Activated T-helper 1 cell treated with anti-CD3 and anti-CD28 coated beads, Interleukin-12 subunit alpha, Interleukin-12 subunit beta, Interleukin-2, Interleukin-4 antibody, amounts not matched to agents 30 ng/mL and 10 ng/mL and 1 ng/mL, durations not matched to agents 14 hours and 24 hours and 36 hours (primary cell): ENCODE measurements at regions of chr1 and their contacts with region 1.

Region 1: DNA sequence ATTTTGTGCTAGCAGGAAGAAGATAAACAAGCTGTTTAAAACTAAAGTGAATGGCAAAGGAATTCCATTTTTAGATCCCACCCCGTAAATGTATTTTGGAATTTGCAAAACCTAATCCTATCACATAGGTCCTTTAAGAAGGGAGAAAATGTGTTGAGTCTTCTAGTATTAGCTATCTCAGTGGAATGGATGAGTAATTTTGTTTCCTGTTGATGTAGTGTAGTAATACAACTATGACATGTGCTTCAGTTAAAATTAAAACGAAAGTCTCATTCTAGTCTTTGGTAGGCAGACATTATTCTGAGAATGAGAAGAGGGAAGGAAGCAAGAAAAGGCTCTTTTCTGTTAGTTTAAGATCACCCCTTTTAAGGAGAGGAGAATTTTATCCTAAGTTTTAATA is 265.9 kb upstream of the C1orf105 start:
- DNase-seq: no peak
- H3K4me3 Mint-ChIP-seq: peak overlapping the region; percentile 23
- H3K27ac Mint-ChIP-seq: peak overlapping the region; percentile 87
- H3K4me1 Mint-ChIP-seq: peaks cover 7% of the 10 kb centered on the region
- H3K27me3 Mint-ChIP-seq: peaks cover 3% of the 10 kb centered on the region

Region 2: GRCh38 chr1:172117800-172118199 is 36.8 kb before region 1 on chr1:
- intact Hi-C with region 1: loop called (anchors 5 kb)
- DNase-seq: peak; percentile 47
- H3K4me3 Mint-ChIP-seq: peak overlapping the region; percentile 13
- H3K27ac Mint-ChIP-seq: peak overlapping the region; percentile 2
- H3K4me1 Mint-ChIP-seq: peaks cover 25% of the 10 kb centered on the region
- H3K27me3 Mint-ChIP-seq: no peaks in the 10 kb centered on the region

Region 3: GRCh38 chr1:172211221-172211620 is 56.7 kb after region 1 on chr1:
- intact Hi-C with region 1: no loop called
- DNase-seq: no peak
- H3K4me3 Mint-ChIP-seq: no peak overlapping the region
- H3K27ac Mint-ChIP-seq: no peak overlapping the region
- H3K4me1 Mint-ChIP-seq: peaks cover 9% of the 10 kb centered on the region
- H3K27me3 Mint-ChIP-seq: no peaks in the 10 kb centered on the region

Region 4: GRCh38 chr1:172229942-172230341 is 75.4 kb after region 1 on chr1:
- intact Hi-C with region 1: no loop called
- DNase-seq: no peak
- H3K4me3 Mint-ChIP-seq: no peak overlapping the region
- H3K27ac Mint-ChIP-seq: no peak overlapping the region
- H3K4me1 Mint-ChIP-seq: peaks cover 7% of the 10 kb centered on the region
- H3K27me3 Mint-ChIP-seq: no peaks in the 10 kb centered on the region